OCI-LY7 (cell line): ENCODE measurements at regions of chr9 and their contacts with region 1.

Region 1: DNA sequence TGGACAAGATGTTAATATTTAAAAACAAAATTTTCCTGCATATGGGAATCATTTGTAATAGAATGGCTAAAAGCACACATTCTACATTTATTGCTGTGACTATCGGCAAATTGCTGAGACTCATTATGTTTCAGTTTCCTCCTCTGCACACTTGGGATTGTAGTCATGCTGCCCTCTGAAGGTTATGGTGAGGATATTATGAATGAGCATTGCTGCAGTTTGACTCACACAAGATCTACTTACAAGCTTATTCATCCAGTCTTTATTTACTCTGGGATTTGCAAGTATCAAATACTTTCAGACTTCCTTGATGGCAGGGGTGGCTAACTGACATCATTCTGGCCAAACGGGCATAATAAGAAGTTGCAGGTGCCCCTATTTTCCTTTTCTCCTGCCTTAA is 9.5 kb upstream of the NFIL3 start:
- DNase-seq: peak; percentile 64
- H3K4me3 ChIP-seq: no peak overlapping the region
- H3K27ac ChIP-seq: no peak overlapping the region
- H3K4me1 ChIP-seq: peaks cover 13% of the 10 kb centered on the region
- CTCF ChIP-seq: peak; percentile 77

Region 2: DNA sequence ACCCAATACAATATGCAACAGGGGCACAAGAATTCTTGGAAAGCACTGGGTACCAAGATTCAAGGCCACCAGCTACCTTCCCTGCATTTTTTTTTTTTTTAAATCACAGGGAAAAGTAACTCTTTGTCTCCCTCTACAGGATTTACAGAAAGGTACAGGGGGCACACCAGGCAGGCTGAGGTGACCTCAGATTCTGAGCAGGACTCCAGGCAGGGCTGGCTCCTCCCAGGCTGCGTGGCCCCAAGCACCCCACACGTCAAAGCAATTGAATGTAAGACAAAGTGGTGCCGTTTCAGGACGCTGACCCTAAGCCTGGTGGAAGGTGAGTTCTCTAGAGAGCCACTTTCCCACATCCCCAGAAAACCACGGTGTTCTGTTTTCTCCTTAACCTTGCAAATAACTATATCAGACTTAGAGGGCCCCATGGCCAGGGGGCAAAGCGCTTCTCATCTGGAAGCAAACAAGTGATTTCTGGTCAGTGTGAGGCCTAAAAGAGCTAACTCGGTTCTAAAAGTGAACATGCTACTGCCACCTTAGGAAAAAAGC is 294.2 kb after region 1 on chr9:
- CTCF ChIA-PET with region 1: no interaction called
- POLR2A ChIA-PET with region 1: no interaction called
- intact Hi-C with region 1: loop called (anchors 5 kb)
- DNase-seq: peak; percentile 61
- H3K4me3 ChIP-seq: no peak overlapping the region
- H3K27ac ChIP-seq: no peak overlapping the region
- H3K4me1 ChIP-seq: peaks cover under 1% of the 10 kb centered on the region
- CTCF ChIP-seq: peak; percentile 86